Endothelial cell of umbilical vein (primary cell): ENCODE measurements at regions of chr4 and their contacts with region 1.

Region 1: GRCh38 chr4:138222046-138222445 is 20.1 kb downstream of the SLC7A11 start:
- DNase-seq: peak; percentile 79
- H3K4me3 ChIP-seq: no peak overlapping the region
- H3K27ac ChIP-seq: peak overlapping the region; percentile 67
- H3K4me1 ChIP-seq: peaks cover 56% of the 10 kb centered on the region
- H3K27me3 ChIP-seq: no peaks in the 10 kb centered on the region
- CTCF ChIP-seq: peak in 1 of 2 donors; percentile 10
- POLR2A ChIP-seq: peak; percentile 31

Region 2: DNA sequence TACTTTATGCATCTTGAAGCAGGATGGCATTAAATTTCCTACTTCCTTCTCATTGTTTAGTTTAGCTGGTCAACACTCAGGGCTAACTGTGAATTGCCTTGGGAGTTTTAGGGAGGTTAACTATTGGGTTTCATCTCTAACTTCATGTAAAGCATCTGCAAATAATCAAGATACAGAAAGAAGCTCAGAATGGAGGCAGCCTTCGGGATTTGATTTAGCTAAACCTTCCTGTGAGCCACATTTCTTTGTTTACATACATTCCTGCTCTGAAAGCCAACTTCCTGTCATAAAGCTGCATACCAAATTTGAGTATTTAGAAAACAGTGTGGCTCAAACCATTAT is 558.0 kb before region 1 on chr4:
- CTCF ChIA-PET with region 1: no interaction called
- POLR2A ChIA-PET with region 1: no interaction called
- dilution Hi-C with region 1: no loop called
- intact Hi-C with region 1: no loop called
- DNase-seq: peak; percentile 62
- H3K4me3 ChIP-seq: peak overlapping the region in 1 of 3 experiments; percentile 11
- H3K27ac ChIP-seq: peak overlapping the region; percentile 3
- H3K4me1 ChIP-seq: peaks cover 11% of the 10 kb centered on the region
- H3K27me3 ChIP-seq: no peaks in the 10 kb centered on the region
- CTCF ChIP-seq: no peak
- POLR2A ChIP-seq: no peak

Region 3: GRCh38 chr4:138202686-138203085 is 19.4 kb before region 1 on chr4:
- CTCF ChIA-PET with region 1: interaction called, 5 read pairs
- POLR2A ChIA-PET with region 1: no interaction called
- dilution Hi-C with region 1: no loop called
- intact Hi-C with region 1: loop called (anchors 2 kb)
- DNase-seq: no peak
- H3K4me3 ChIP-seq: no peak overlapping the region
- H3K27ac ChIP-seq: peak overlapping the region; percentile 5
- H3K4me1 ChIP-seq: peaks cover 54% of the 10 kb centered on the region
- H3K27me3 ChIP-seq: no peaks in the 10 kb centered on the region
- CTCF ChIP-seq: no peak
- POLR2A ChIP-seq: no peak